ENCODE measurements at regions of chr6 and their contacts with region 1.

Region 1: DNA sequence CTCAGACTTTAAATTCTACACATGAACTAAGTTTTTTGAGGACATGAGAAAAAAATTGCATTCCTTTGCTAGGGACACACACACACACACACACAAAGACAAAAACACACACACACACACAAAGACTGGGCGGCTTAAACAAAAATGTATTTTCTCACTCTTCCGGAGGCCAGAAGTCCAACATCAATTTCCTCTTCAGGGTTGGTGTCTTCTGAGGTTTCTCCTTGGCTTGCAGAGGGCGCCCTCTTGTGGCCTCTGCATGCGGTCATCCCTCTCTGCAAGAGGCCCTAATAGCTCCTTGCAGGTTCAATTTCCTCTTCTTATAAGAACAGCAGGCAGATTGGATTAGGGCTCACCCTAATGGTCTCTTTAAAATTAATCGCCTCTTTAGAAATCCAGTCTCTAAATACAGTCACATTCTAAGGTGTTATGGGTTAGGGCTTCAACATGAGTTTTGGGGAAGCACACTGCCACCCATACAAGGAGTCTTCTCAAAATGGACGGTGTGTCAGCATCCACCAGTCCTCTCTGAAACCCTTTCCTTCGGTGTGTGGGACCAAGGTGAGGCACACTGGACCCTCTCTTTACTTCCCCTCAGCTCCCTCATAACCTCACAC is 61.4 kb downstream of the GPR6 start:
- DNase-seq: peak; percentile 95
- H3K4me3 ChIP-seq: peak overlapping the region; percentile 10 to 68 (median 36)
- H3K27ac ChIP-seq: peak overlapping the region; percentile 55 to 84 (median 78)
- H3K4me1 ChIP-seq: peaks cover 0 to 43% (median 17%) of the 10 kb centered on the region in 6 donors
- H3K27me3 ChIP-seq: no peaks in the 10 kb centered on the region
- CTCF ChIP-seq: peak; percentile 78 to 94 (median 91)
- POLR2A ChIP-seq: no peak

Region 2: GRCh38 chr6:109705258-109705657 is 334.2 kb before region 1 on chr6:
- intact Hi-C with region 1: loop called (anchors 2 kb)
- DNase-seq: peak; percentile 91
- H3K4me3 ChIP-seq: no peak overlapping the region
- H3K27ac ChIP-seq: peak overlapping the region in 2 of 8 donors; percentile 16 to 70
- H3K4me1 ChIP-seq: peaks cover 5 to 75% (median 53%) of the 10 kb centered on the region in 6 donors
- H3K27me3 ChIP-seq: no peaks in the 10 kb centered on the region
- CTCF ChIP-seq: peak; percentile 89 to 98 (median 95)
- POLR2A ChIP-seq: no peak

Region 3: DNA sequence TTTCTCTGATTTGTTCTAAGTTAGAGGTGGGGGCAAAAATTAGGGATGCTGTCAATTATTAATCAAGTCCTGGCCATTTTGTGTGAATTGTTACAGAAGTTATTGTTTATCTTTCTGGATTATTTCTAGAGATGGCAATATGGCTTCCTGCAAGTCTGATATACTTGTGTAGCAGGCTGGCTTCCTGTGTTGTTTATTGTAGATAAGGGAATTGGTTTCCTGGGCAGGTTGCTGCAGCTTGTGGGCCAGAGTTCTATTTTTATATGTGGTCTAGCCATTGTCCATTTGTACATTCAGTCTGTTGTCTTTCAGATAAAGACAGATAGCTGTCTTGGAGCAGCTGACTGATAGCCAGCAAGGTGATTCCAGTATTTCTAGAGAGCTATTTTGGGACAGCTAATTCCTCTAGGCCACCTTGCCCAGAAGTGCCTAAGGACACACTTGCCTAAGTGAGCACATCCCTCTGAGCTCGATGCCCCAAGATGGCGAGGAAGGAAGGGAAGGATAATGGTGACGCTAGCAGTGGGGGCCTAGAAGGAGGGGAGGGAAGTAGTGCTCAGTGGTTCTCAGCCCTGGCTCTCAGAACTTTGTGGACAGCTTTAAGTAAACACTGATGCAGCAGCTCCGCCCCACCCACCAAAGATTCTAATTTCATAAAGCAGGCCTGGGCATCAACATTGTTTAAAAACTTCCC is 350.4 kb after region 1 on chr6:
- intact Hi-C with region 1: loop called (anchors 2 kb)
- DNase-seq: no peak
- H3K4me3 ChIP-seq: no peak overlapping the region
- H3K27ac ChIP-seq: no peak overlapping the region
- H3K4me1 ChIP-seq: peaks cover 0 to 13% (median 0%) of the 10 kb centered on the region in 6 donors
- H3K27me3 ChIP-seq: no peaks in the 10 kb centered on the region
- CTCF ChIP-seq: no peak
- POLR2A ChIP-seq: no peak

Measured in spleen (tissue), 13 donors.